ENCODE measurements at regions of chr11 and their contacts with region 1.

Region 1: DNA sequence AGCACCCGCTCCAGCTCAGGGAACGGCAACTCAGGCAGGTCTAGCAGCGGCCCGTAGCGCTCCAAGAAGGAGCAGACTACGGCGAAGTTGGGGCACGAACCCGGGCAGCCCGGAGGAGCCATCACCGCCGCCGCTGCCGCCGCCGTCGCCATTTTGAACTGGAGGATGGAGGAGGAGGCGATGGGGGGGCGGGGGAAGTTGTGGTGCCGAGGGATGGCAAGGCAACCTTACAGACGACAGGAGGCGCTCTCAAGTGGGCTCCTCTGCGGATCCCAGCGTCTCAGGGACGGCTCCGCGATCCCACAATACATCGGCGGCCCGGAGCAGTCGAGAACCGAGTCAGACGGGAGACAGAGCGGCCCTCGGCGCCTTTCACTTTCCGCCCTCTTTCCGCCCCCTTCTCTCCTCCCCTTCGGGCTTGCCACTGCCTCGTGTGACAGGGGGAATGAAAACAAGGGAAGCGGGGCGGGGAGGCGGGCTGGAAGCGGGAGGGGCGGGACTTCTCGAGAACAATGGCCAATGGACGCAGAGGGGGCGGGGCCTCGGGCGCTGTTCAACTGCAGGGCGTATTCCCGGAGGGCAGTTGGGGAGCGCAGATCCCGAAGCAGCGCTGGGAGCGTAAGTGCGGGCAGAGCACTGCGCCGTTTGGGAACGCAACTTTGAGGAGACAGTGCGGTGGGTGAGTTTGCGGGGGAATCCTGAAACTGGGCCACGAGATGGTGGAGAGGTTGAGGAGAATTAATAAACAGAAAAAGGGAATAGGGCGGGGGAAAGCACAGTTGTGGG is at the starts of genes AAMDC and RSF1:
- DNase-seq: peak; percentile 95 to 99 (median 98)
- H3K4me3 ChIP-seq: peak within 1 kb of the TSS; percentile 96 to 100
- H3K4me3 Mint-ChIP-seq: peak within 1 kb of the TSS; percentile 98 to 100 (median 99)
- H3K27ac ChIP-seq: peak within 1 kb of the TSS; percentile 88
- H3K27ac Mint-ChIP-seq: peak within 1 kb of the TSS; percentile 92 to 98 (median 96)
- H3K4me1 ChIP-seq: peaks cover 45% of the 10 kb centered on the region
- H3K4me1 Mint-ChIP-seq: peaks cover 30 to 52% (median 39%) of the 10 kb centered on the region in 4 donors
- H3K27me3 ChIP-seq: no peaks in the 10 kb centered on the region
- H3K27me3 Mint-ChIP-seq: no peaks in the 10 kb centered on the region
- total RNA-seq, gene AAMDC: 7.6 to 9.4 TPM
- total RNA-seq, gene RSF1: 105 to 106 TPM

Region 2: DNA sequence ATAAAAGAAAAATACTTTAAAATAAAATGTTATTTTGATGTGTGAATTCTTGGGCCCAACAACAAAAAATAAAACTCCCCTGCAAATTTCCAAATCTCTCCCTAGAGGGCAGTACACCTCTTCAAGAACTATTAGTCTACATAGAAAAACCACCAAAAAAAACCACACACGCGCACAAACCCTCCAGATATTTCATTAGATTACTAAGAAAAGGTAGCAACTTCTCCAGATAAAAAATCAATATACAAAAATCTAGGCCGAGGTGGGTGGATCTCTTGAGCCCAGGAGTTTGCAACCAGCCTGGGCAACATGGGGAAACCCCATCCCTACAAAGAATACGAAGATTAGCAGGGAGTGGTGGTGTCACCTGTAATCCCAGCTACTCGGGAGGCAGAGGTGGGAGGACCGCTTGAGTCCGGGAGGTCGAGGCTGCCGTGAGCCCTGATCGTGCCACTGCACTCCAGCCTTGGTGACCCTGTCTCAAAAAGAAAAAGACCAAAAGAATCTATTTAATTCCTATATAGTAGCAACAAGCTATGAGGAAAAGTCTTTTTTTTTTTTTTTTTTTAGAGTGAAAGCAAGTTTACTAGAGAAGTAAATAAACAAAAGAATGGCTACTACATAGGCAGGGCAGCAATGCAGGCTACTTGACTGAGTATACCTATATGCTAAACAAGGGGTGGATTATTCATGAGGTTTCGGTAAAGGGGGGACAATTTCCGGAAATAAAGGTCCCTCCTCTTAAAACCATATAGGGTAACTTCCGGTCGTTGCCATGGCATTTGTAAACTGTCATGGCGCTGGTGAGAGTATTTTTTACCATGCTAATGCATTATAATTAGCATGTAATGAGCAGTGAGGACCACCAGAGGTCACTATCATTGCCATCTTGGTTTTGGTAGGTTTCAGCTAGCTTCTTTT is 773.5 kb before region 1 on chr11:
- CTCF ChIA-PET with region 1: no interaction called
- POLR2A ChIA-PET with region 1: no interaction called
- intact Hi-C with region 1: loop called (anchors 2 kb)
- DNase-seq: peak; percentile 90 to 94 (median 93)
- H3K4me3 ChIP-seq: peak overlapping the region; percentile 33 to 59
- H3K4me3 Mint-ChIP-seq: peak overlapping the region; percentile 67 to 83 (median 72)
- H3K27ac ChIP-seq: peak overlapping the region; percentile 61
- H3K27ac Mint-ChIP-seq: peak overlapping the region; percentile 24 to 92 (median 60)
- H3K4me1 ChIP-seq: peaks cover 16% of the 10 kb centered on the region
- H3K4me1 Mint-ChIP-seq: peaks cover 5 to 11% (median 6%) of the 10 kb centered on the region in 4 donors
- H3K27me3 ChIP-seq: no peaks in the 10 kb centered on the region
- H3K27me3 Mint-ChIP-seq: peaks cover 2 to 3% of the 10 kb centered on the region in 2 donors

Region 3: DNA sequence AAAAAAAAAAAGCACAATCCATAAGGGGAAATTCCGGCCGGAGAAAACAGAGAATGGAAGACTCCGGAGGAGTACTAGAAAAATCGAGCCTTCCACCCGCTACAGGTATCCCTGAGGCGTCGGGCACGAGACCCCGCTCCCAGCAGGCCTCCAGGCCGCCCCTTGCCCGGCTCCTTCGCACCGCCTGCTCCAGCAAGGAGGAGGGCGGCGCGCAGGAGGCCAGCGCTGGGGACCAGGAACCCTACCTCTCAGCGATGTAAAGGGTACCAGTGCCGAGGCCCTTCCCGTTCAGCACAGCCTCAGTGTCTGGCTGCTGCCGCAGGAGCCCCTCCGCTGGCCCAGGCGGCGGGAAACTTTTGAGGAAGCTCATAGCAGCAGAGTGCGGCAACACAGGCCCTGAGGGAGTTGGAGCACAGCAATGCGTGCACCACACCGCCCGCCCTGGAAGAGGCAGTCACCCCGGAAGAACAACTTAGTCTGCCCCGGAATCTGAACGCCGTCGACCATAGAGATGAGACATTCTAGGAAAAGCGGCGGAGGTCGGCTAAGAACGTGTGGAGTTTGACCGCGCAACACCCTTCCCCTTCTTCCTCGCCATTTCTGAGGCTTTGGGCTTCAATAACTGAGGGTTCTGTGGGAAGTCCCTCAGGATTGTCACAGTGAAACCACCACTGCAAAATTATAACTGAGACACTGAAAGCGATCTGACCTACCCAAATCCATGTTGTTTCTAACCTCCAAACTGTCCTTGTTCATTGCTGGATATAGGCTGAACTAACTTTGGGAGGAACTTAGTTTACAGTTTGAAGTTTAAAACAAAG is 183.2 kb before region 1 on chr11 and contains the start of gene CLNS1A:
- CTCF ChIA-PET with region 1: no interaction called
- POLR2A ChIA-PET with region 1: interaction called, 6 read pairs
- intact Hi-C with region 1: loop called (anchors 1 kb)
- DNase-seq: peak; percentile 72 to 81 (median 78)
- H3K4me3 ChIP-seq: peak within 1 kb of the TSS; percentile 52 to 64
- H3K4me3 Mint-ChIP-seq: peak within 1 kb of the TSS; percentile 95 to 99 (median 97)
- H3K27ac ChIP-seq: peak within 1 kb of the TSS; percentile 68
- H3K27ac Mint-ChIP-seq: peak within 1 kb of the TSS; percentile 89 to 97 (median 93)
- H3K4me1 ChIP-seq: peaks cover 30% of the 10 kb centered on the region
- H3K4me1 Mint-ChIP-seq: peaks cover 28 to 48% (median 40%) of the 10 kb centered on the region in 4 donors
- H3K27me3 ChIP-seq: no peaks in the 10 kb centered on the region
- H3K27me3 Mint-ChIP-seq: peaks cover 1 to 5% of the 10 kb centered on the region in 2 donors
- total RNA-seq, gene CLNS1A: 116 to 118 TPM

Region 4: DNA sequence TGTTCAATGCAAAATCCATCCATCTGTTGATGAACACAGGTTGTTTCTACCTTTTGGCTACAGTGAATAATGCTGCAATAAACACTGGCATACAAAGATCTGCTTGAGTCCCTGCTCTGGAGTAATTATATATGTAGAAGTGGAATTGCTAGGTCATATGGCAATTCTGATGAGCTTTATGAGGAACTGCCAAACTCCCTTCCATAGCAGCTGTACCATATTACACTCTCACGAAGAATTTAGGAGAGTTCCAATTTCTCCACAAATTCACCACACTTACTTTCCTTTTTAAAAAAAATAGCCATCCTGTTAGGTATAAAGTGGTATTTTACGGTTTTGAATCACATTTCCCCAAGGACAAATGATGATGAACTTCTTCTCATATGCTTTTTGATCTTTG is 62.4 kb before region 1 on chr11:
- CTCF ChIA-PET with region 1: no interaction called
- POLR2A ChIA-PET with region 1: no interaction called
- intact Hi-C with region 1: no loop called
- DNase-seq: no peak
- H3K4me3 ChIP-seq: no peak overlapping the region
- H3K4me3 Mint-ChIP-seq: no peak overlapping the region
- H3K27ac ChIP-seq: no peak overlapping the region
- H3K27ac Mint-ChIP-seq: no peak overlapping the region
- H3K4me1 ChIP-seq: no peaks in the 10 kb centered on the region
- H3K4me1 Mint-ChIP-seq: peaks cover 16 to 30% (median 22%) of the 10 kb centered on the region in 4 donors
- H3K27me3 ChIP-seq: no peaks in the 10 kb centered on the region
- H3K27me3 Mint-ChIP-seq: no peaks in the 10 kb centered on the region

Region 5: DNA sequence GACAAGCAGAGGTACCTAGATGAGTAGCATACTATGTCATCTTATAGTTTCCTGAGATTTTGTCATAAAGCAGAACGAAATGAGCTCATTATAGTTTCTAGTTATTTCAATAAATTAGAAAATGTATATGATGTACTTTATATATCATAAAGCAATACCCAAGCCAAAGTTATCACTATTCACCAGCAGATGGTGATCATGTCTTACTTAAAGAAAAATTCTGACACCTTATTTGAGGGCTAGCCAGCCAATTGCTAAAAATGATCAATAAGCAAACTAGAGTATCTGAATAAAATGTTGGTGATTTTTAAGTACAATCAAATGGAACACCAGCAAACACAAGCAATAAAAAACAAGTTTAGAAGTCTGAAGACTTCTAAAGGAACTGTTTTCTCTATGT is 44.3 kb before region 1 on chr11:
- CTCF ChIA-PET with region 1: interaction called, 4 read pairs
- POLR2A ChIA-PET with region 1: interaction called, 5 read pairs
- intact Hi-C with region 1: loop called (anchors 2 kb)
- DNase-seq: peak in 4 of 5 donors; percentile 18 to 32 (median 26)
- H3K4me3 ChIP-seq: no peak overlapping the region
- H3K4me3 Mint-ChIP-seq: no peak overlapping the region
- H3K27ac ChIP-seq: no peak overlapping the region
- H3K27ac Mint-ChIP-seq: no peak overlapping the region
- H3K4me1 ChIP-seq: peaks cover 23% of the 10 kb centered on the region
- H3K4me1 Mint-ChIP-seq: peaks cover 40 to 70% (median 50%) of the 10 kb centered on the region in 4 donors
- H3K27me3 ChIP-seq: no peaks in the 10 kb centered on the region
- H3K27me3 Mint-ChIP-seq: no peaks in the 10 kb centered on the region

Region 6: DNA sequence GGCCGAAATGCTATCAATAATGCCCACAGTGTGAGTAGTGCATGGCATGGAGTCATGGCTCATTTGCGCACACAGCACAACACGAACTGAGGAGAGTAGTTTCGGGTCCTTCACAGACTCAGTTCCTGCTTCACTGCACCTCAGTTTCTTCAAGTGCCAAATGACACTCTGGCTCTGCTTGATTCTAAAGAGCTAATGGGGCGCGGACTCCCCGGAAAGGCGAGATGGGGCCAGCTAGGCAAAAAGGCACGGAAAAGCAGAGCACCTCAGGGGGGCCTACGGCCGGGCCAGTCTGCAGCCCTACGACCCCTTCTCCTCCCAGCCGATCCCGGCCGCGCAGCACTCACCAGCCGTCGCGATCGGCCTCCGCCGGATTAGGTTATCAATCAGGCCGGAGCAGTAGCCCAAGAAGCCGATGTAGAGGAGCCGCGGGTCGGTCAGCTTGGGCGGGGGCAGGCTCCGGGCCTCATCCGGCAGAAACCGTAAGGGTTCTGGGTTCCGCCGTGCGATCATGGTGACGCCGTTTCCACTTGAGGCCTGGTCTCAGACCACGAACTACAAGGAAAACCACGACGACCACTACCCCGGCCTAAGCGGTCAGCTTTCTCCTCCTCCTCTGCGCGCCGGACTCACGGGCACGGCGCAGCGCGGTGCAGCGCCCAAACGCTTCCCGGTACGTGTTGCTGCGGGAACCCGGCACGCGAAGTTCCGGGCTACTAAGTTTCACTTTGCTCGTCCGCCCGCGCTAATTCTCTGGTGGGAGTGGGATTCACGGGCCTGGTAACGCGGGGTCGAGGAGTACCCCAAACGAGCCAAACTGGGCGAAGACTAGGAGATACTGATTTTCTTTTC is 258.7 kb after region 1 on chr11 and contains the start of gene NDUFC2:
- CTCF ChIA-PET with region 1: no interaction called
- POLR2A ChIA-PET with region 1: interaction called, 5 read pairs
- intact Hi-C with region 1: loop called (anchors 2 kb)
- DNase-seq: peak; percentile 60 to 66 (median 64)
- H3K4me3 ChIP-seq: peak within 1 kb of the TSS; percentile 77 to 98
- H3K4me3 Mint-ChIP-seq: peak within 1 kb of the TSS; percentile 93 to 98 (median 96)
- H3K27ac ChIP-seq: peak within 1 kb of the TSS; percentile 75
- H3K27ac Mint-ChIP-seq: peak within 1 kb of the TSS; percentile 87 to 98 (median 96)
- H3K4me1 ChIP-seq: peaks cover 55% of the 10 kb centered on the region
- H3K4me1 Mint-ChIP-seq: peaks cover 34 to 72% (median 49%) of the 10 kb centered on the region in 4 donors
- H3K27me3 ChIP-seq: no peaks in the 10 kb centered on the region
- H3K27me3 Mint-ChIP-seq: no peaks in the 10 kb centered on the region
- total RNA-seq, gene NDUFC2: 80.5 to 86.5 TPM

Region 7: DNA sequence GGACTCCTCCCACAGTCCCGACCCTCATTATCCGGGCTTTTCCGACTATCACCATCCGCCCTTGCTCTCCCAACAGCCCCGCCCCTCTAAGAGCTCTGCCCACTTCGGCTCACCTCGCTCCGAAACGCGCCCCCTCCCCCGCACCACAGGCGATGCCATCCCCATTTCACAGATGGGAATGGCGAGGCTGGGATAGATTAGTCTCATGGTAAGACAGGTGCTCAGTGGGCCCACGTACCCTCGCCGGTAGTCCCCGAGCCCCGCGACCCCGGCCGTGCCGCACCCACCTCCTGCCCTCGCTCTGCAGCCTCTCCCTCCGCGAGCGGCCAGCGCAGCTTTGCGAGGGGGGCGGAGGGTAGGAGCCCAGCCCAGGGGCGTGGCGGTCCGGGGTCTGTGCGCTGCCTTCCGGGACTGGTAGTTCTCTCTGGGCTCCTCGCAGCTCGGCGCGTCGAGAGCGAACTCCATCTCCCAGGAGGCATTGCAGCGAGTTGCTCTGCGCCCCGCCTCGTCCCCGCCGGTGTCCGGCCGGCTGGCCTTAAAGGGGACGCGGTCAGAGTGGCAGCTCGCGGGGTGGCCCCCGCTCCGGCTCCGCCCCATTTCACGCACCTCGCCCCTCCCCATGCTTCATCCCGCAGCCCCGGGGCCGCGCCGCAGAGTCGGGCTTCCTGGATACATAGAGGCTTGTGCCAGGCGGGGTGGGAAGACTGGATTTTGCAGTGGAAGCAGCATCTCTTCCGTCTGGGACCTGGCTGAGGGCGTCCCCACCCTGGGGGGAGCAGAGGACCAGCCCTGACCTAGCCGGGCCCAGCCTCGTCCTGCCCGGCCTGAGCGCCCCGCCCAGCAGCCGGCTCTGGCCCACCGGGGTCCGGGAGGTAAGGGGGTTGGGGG is 367.8 kb after region 1 on chr11 and contains the starts of genes KCTD21 and USP35:
- CTCF ChIA-PET with region 1: no interaction called
- POLR2A ChIA-PET with region 1: no interaction called
- intact Hi-C with region 1: loop called (anchors 2 kb)
- DNase-seq: peak; percentile 85 to 92 (median 87)
- H3K4me3 ChIP-seq: peak within 1 kb of the TSS; percentile 88 to 90
- H3K4me3 Mint-ChIP-seq: peak within 1 kb of the TSS; percentile 98 to 99 (median 99)
- H3K27ac ChIP-seq: peak within 1 kb of the TSS; percentile 85
- H3K27ac Mint-ChIP-seq: peak within 1 kb of the TSS; percentile 95 to 99 (median 98)
- H3K4me1 ChIP-seq: peaks cover 39% of the 10 kb centered on the region
- H3K4me1 Mint-ChIP-seq: peaks cover 33 to 63% (median 47%) of the 10 kb centered on the region in 4 donors
- H3K27me3 ChIP-seq: no peaks in the 10 kb centered on the region
- H3K27me3 Mint-ChIP-seq: no peaks in the 10 kb centered on the region
- total RNA-seq, gene KCTD21: 8.0 to 8.6 TPM
- total RNA-seq, gene USP35: 12.4 to 14.3 TPM

Region 8: GRCh38 chr11:78574386-78575381 is 753.9 kb after region 1 on chr11 and contains the start of gene NARS2:
- CTCF ChIA-PET with region 1: no interaction called
- POLR2A ChIA-PET with region 1: no interaction called
- intact Hi-C with region 1: loop called (anchors 2 kb)
- DNase-seq: peak; percentile 94 to 98 (median 96)
- H3K4me3 ChIP-seq: peak within 1 kb of the TSS; percentile 46 to 47
- H3K4me3 Mint-ChIP-seq: peak within 1 kb of the TSS; percentile 92 to 99 (median 97)
- H3K27ac ChIP-seq: peak within 1 kb of the TSS; percentile 86
- H3K27ac Mint-ChIP-seq: peak within 1 kb of the TSS; percentile 91 to 100 (median 98)
- H3K4me1 ChIP-seq: peaks cover 28% of the 10 kb centered on the region
- H3K4me1 Mint-ChIP-seq: peaks cover 20 to 41% (median 29%) of the 10 kb centered on the region in 4 donors
- H3K27me3 ChIP-seq: no peaks in the 10 kb centered on the region
- H3K27me3 Mint-ChIP-seq: no peaks in the 10 kb centered on the region
- total RNA-seq, gene NARS2: 16.9 to 18.4 TPM